ENCODE measurements at regions of chr14 and their contacts with region 1.

Region 1: DNA sequence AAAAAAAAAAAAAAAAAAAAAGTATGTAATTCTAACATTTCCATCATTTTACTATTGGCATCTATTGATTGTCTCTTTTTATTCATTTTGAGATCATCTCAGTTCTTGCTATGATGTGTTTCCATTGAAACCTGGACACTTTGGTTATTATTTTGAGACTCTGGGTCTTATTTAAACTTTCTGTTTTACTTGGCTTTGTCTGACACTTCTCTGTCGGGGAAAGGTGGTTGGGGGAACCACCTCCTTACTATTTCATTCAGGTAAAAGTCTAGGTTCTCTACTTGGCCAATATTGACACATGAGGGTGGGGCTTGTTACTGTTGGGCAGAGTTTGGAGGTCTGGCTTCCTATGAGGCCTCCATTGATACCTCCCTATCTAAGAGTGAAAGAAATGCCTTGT is 228.0 kb downstream of the NRXN3 start:
- DNase-seq: no peak
- ATAC-seq: no peak
- H3K4me3 ChIP-seq: no peak overlapping the region
- H3K4me3 Mint-ChIP-seq: no peak overlapping the region
- H3K27ac ChIP-seq: no peak overlapping the region
- H3K27ac Mint-ChIP-seq: no peak overlapping the region
- H3K4me1 ChIP-seq: no peaks in the 10 kb centered on the region
- H3K4me1 Mint-ChIP-seq: peaks cover 0 to 1% (median 0%) of the 10 kb centered on the region in 7 donors
- H3K27me3 ChIP-seq: no peaks in the 10 kb centered on the region
- H3K27me3 Mint-ChIP-seq: peaks cover 0 to 13% (median 0%) of the 10 kb centered on the region in 5 donors

Region 2: DNA sequence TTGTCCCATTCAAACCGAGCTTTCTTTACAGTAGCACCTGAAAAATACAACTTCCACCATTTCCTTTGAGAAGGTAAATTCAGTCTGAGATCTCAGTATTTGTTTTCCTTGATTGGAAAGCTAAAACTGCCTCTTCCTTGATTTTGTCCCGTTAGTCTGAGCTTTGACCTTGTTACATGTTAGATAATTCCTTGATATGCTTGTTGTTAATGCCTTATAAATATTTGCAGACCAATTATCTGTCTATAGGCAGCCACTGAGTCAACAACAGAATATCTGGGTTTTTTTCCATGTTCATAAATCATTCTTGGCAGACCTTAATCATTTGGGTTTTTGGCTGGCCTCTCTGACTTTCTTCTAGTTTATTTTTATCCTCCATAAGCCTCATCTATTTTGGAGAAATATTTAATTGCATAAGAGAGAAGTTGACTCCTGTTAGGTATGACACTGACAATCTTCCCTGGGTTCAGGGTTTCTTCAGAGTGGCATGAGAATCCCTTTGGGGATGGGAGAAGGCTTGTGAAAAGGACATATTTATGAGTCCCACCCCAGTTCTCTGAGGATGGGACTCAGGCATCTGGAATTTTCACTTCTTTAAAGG is 71.6 kb after region 1 on chr14:
- CTCF ChIA-PET with region 1: no interaction called
- POLR2A ChIA-PET with region 1: no interaction called
- intact Hi-C with region 1: loop called in 1 of 2 experiments (anchors 2 kb)
- DNase-seq: no peak
- ATAC-seq: no peak
- H3K4me3 ChIP-seq: no peak overlapping the region
- H3K4me3 Mint-ChIP-seq: no peak overlapping the region
- H3K27ac ChIP-seq: no peak overlapping the region
- H3K27ac Mint-ChIP-seq: no peak overlapping the region
- H3K4me1 ChIP-seq: no peaks in the 10 kb centered on the region
- H3K4me1 Mint-ChIP-seq: no peaks in the 10 kb centered on the region
- H3K27me3 ChIP-seq: no peaks in the 10 kb centered on the region
- H3K27me3 Mint-ChIP-seq: peaks cover 0 to 10% (median 5%) of the 10 kb centered on the region in 5 donors

Measured in naive thymus-derived CD4-positive, alpha-beta T cell (primary cell).